ENCODE measurements at regions of chr2 and their contacts with region 1.

Region 1: DNA sequence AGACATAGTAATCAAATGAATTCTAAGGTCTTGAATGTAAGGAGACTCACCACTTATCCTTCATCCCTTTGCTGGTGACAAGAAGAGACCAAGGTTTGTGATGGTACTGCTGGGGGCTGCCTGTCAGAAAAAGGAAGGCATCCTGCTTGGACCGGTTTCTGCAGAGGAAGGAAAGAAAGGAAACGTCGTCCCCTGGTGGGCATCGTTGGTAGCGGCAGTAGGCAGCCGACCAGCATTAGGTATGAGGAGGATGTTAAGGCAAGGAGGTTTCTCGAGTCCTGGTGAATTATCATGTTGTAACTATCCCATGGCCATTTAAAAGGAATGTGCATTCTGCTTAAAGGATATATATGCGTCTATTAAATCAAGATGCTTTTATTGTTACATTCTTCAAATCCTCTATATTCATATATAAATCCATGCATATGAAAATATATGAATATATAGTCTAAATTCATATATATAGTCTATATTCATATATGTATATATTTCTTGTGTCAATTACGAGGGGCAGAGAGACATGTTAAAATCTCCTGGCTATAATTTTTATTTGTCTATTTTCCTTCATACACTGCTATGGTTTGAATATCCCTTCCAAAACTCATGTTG is 94.4 kb upstream of the TGFA start:
- ATAC-seq: peak; percentile 77 to 96 (median 83)
- H3K4me3 ChIP-seq: no peak overlapping the region
- H3K27ac ChIP-seq: no peak overlapping the region
- H3K4me1 ChIP-seq: peaks cover 0 to 2% of the 10 kb centered on the region in 2 donors

Region 2: GRCh38 chr2:70301344-70302194 is 346.4 kb before region 1 on chr2 and contains the start of gene FAM136A:
- in situ Hi-C with region 1: loop called in 4 of 9 experiments (anchors 10 to 25 kb)
- ATAC-seq: peak; percentile 82 to 95 (median 88)
- H3K4me3 ChIP-seq: peak within 1 kb of the TSS; percentile 62 to 86 (median 72)
- H3K27ac ChIP-seq: peak within 1 kb of the TSS; percentile 73 to 82
- H3K4me1 ChIP-seq: peaks cover 12 to 13% of the 10 kb centered on the region in 2 donors
- total RNA-seq, gene FAM136A: 27.7 to 77.7 (median 43.4) TPM

Region 3: DNA sequence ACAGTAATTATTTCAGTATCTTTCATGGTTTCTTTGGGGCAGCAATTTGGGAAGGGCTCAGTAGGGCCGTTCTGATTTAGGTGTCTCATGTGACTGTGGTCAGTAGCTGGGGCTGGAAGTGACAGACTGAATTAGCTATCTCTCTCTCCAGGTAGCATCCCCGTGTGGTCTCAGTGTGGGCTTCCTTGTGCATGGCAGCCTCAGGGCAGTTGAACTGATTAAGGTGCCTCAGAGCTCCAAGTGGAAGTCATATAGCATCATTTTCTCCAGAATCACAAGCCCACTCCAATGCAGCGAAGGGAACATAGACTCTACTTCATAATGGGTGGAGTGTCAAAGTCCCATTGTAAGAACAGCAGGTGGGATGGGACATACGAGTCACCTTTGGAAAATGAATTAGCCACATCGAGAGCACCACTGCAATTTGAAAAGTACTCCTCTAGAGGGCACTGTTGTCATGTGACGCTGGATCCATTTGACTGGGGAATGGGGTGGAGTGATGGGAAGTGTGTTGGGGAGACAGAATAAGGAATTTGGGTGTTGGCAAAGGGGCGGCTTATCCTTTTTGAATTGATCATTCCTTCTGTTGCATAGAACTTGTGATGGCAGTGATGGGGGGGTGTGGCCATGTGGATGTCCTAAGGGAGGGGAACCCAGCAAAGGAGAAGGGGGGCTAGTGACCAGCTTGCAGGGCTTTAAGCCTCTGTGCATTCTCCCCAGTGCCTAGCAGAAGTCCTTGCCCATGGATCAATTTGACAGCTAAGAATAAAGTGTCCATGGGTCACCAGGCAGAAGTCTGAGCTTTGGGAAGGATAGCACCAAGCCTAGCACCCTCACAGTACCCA is 306.8 kb before region 1 on chr2:
- in situ Hi-C with region 1: loop called in 3 of 9 experiments (anchors 25 kb)
- ATAC-seq: peak; percentile 41 to 88 (median 58)
- H3K4me3 ChIP-seq: no peak overlapping the region
- H3K27ac ChIP-seq: no peak overlapping the region
- H3K4me1 ChIP-seq: no peaks in the 10 kb centered on the region

Region 4: DNA sequence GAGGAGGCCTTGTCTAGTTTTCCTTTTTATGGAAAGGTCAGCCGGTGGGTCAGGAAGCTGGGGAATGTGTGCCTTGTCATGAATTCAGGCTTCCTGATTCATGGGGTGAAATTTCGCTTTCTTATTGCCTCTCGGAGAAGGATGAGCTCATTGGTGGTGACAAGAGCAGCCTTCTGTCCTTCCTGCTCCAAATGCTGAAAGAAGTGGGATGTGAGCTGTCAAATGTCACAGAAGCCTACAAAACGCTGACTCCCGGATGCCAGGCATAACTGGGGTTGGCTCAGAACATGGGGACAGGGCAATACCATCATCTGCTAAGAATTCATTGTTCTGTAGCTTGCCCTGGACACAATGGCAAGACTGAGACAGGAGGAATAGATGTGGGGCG is 290.3 kb before region 1 on chr2:
- in situ Hi-C with region 1: no loop called
- ATAC-seq: peak in 4 of 8 experiments; percentile 22 to 57 (median 48)
- H3K4me3 ChIP-seq: no peak overlapping the region
- H3K27ac ChIP-seq: no peak overlapping the region
- H3K4me1 ChIP-seq: no peaks in the 10 kb centered on the region

Region 5: GRCh38 chr2:71331581-71332434 is 683.8 kb after region 1 on chr2 and contains the start of gene ZNF638:
- in situ Hi-C with region 1: no loop called
- ATAC-seq: peak; percentile 93 to 97 (median 96)
- H3K4me3 ChIP-seq: peak within 1 kb of the TSS; percentile 65 to 95 (median 88)
- H3K27ac ChIP-seq: peak within 1 kb of the TSS; percentile 95 to 98
- H3K4me1 ChIP-seq: peaks cover 0 to 14% of the 10 kb centered on the region in 2 donors
- total RNA-seq, gene ZNF638: 110 to 227 (median 183) TPM